GM18951 (cell line): ENCODE measurements at regions of chr19 and their contacts with region 1.

Region 1: GRCh38 chr19:8252922-8253589 is 43.9 kb downstream of the CERS4 start:
- POLR2A ChIP-seq: no peak

Region 2: GRCh38 chr19:8005534-8006256 is 247.4 kb before region 1 on chr19 and contains the start of gene ELAVL1:
- in situ Hi-C with region 1: loop called (anchors 25 kb)
- POLR2A ChIP-seq: peak; percentile 93

Region 3: GRCh38 chr19:8167985-8168384 is 85.1 kb before region 1 on chr19:
- in situ Hi-C with region 1: loop called (anchors 5 kb)
- POLR2A ChIP-seq: no peak